ENCODE measurements at regions of chr6 and their contacts with region 1.

Region 1: GRCh38 chr6:16761471-16762267 is 409 bp upstream of the ATXN1 start:
- DNase-seq: no peak
- H3K4me3 ChIP-seq: peak overlapping the region; percentile 90
- CTCF ChIP-seq: no peak

Region 2: GRCh38 chr6:16514249-16514648 is 247.4 kb before region 1 on chr6:
- in situ Hi-C with region 1: loop called (anchors 25 kb)
- DNase-seq: peak; percentile 45
- H3K4me3 ChIP-seq: no peak overlapping the region
- CTCF ChIP-seq: peak; percentile 67

Region 3: GRCh38 chr6:16684896-16685554 is 76.6 kb before region 1 on chr6:
- in situ Hi-C with region 1: no loop called
- DNase-seq: no peak
- H3K4me3 ChIP-seq: no peak overlapping the region
- CTCF ChIP-seq: no peak

Region 4: GRCh38 chr6:16712931-16713484 is 48.7 kb before region 1 on chr6:
- in situ Hi-C with region 1: no loop called
- DNase-seq: peak; percentile 83
- H3K4me3 ChIP-seq: peak overlapping the region; percentile 3
- CTCF ChIP-seq: peak; percentile 58

Region 5: DNA sequence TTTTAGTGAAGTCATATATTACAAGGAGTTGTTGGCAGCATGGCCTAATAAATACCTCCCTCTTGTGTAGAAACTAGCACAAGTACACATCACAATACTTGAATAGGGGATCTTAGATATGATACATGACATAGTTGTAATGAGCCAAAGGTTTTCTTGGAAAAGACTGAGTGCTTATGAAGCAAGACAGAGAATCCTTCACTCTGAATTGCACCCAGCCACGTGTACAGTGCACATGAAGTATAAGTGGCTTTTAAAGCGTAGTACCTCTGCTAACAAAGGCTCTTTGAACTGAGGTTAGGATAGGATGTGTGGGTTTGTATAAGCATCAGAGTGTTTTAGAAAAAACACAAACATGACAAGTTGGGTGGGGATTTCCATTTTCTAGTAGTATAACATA is 194.7 kb after region 1 on chr6:
- in situ Hi-C with region 1: loop called (anchors 10 kb)
- DNase-seq: no peak
- H3K4me3 ChIP-seq: no peak overlapping the region
- CTCF ChIP-seq: no peak